MCF 10A (cell line): ENCODE measurements at regions of chr10 and their contacts with region 1.

Region 1: DNA sequence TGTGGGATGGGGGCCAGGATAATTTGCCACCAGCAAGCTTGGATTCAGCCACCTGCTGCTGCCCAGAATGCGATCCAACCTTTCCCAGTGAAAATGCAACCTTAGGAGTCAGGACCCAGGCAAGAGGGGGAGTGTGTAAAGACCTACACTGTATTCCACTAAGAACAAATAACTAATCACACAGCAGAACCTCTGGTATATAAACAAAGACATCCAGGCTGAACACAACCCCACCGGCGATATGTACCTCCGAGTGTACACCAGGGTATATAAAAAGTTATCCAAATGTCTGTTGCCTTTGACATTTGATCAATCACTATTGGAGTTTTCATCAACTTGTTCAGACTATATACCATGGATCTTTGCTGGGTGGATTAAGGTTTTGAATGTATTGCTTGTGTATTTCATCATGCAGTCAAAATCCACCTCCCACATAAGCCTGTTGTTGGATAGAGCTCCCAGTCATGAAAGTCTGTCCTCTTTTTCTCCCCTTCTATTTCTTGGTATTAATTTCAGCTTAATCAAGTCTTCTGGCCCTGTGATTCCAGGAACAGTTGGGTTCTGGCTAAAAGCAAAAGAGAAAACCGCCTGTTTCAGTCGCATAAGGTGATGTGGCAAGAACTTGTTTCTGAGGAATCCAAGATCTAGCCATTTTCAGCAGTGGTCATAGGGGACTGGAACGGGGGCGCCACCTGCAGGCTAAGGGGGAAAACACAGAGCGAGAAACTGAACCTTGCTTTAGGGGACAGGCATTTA is 290.7 kb downstream of the CCDC3 start:
- DNase-seq: peak; percentile 88
- H3K4me3 Mint-ChIP-seq: peak overlapping the region; percentile 13
- H3K27ac Mint-ChIP-seq: peak overlapping the region; percentile 96
- H3K4me1 Mint-ChIP-seq: peaks cover 37% of the 10 kb centered on the region
- H3K27me3 Mint-ChIP-seq: no peaks in the 10 kb centered on the region
- CTCF ChIP-seq: peak; percentile 89

Region 2: DNA sequence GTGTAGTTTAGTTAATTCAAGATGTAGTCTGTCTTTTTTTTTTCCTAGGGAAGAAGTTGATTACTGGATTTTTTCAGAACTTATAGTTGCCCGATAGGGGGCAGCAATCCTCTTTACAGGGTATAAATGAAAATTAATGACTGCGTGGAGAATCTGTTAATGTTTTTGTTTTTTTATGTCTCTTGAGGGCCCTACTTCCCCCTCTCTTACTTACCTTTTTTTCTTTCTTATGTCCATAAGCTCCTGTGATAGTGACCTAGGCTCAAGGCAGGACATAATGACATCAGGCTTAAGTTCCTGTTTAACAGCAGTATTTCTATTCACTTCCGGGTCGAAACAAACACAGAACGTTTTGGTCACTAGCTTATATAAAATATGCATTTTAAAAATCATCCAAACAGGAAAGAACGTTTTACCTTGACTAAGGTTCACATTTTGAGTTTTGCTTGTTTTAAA is 496.0 kb before region 1 on chr10:
- CTCF ChIA-PET with region 1: interaction called, 36 read pairs
- POLR2A ChIA-PET with region 1: no interaction called
- intact Hi-C with region 1: loop called (anchors 1 kb)
- DNase-seq: peak; percentile 65
- H3K4me3 Mint-ChIP-seq: no peak overlapping the region
- H3K27ac Mint-ChIP-seq: peak overlapping the region; percentile 59
- H3K4me1 Mint-ChIP-seq: no peaks in the 10 kb centered on the region
- H3K27me3 Mint-ChIP-seq: no peaks in the 10 kb centered on the region
- CTCF ChIP-seq: peak; percentile 66

Region 3: GRCh38 chr10:12264204-12264940 is 446.4 kb before region 1 on chr10:
- CTCF ChIA-PET with region 1: interaction called, 128 read pairs
- POLR2A ChIA-PET with region 1: interaction called, 6 read pairs
- intact Hi-C with region 1: loop called (anchors 1 kb)
- DNase-seq: peak; percentile 62
- H3K4me3 Mint-ChIP-seq: peak overlapping the region; percentile 62
- H3K27ac Mint-ChIP-seq: peak overlapping the region; percentile 40
- H3K4me1 Mint-ChIP-seq: peaks cover 8% of the 10 kb centered on the region
- H3K27me3 Mint-ChIP-seq: no peaks in the 10 kb centered on the region
- CTCF ChIP-seq: peak; percentile 90

Region 4: GRCh38 chr10:12348870-12349628 is 361.7 kb before region 1 on chr10 and contains the start of gene CAMK1D:
- CTCF ChIA-PET with region 1: interaction called, 5 read pairs
- POLR2A ChIA-PET with region 1: no interaction called
- intact Hi-C with region 1: loop called (anchors 2 kb)
- DNase-seq: peak; percentile 55
- H3K4me3 Mint-ChIP-seq: peak within 1 kb of the TSS; percentile 88
- H3K27ac Mint-ChIP-seq: no peak within 1 kb of the TSS
- H3K4me1 Mint-ChIP-seq: peaks cover 10% of the 10 kb centered on the region
- H3K27me3 Mint-ChIP-seq: peaks cover 15% of the 10 kb centered on the region
- CTCF ChIP-seq: peak; percentile 35
- total RNA-seq, gene CAMK1D: 1.7 and 3.3 TPM in 2 replicates

Region 5: DNA sequence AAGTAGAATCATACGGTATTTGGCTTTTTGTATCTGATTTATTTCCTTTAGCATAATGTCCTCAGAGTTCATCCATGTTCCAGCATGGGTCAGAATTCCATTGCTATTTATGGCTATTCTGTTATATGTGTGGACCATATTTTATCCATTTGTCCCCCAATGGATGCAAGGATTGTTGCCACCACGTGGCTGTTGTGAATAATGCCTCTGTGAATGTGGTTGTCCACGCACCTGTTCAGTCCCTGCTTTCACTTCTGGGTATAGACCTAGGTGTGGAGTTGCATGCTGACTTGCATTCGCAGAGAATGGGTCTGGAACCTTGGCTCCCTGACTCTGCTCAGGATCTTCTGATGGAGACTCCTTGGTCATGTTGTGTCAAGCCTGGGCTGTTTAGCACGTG is 161.5 kb before region 1 on chr10:
- CTCF ChIA-PET with region 1: no interaction called
- POLR2A ChIA-PET with region 1: no interaction called
- intact Hi-C with region 1: loop called (anchors 5 kb)
- DNase-seq: peak; percentile 34
- H3K4me3 Mint-ChIP-seq: no peak overlapping the region
- H3K27ac Mint-ChIP-seq: no peak overlapping the region
- H3K4me1 Mint-ChIP-seq: no peaks in the 10 kb centered on the region
- H3K27me3 Mint-ChIP-seq: no peaks in the 10 kb centered on the region
- CTCF ChIP-seq: no peak

Region 6: DNA sequence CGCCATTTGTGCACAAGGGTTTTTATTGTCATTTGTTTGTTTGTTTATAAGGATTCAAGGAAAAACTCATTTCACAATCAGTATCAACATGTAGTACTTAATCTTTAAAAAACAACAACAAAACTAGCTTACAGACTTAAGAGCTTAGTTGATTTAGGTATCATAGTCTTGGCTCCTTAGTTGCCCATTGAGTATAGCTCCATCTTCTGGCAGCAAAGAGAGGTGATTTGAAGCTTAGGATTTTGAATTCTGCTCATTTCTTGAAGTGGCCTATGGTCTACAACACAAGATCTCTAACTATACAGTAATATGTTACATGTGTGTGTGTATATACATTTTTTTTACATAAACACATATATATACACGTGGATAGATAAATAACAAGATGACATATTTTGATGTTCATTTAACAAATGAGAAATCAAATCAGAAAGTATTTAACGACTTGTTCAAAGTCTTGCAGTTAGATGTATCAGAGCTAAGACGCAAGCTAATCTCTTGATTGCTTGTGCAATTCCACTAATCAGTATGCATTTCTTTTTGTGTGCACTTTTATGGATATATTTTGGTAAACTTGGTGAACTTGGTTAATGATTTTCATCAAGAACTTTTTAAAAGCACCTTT is 54.1 kb before region 1 on chr10:
- CTCF ChIA-PET with region 1: interaction called, 38 read pairs
- POLR2A ChIA-PET with region 1: interaction called, 3 read pairs
- intact Hi-C with region 1: loop called (anchors 1 kb)
- DNase-seq: peak; percentile 54
- H3K4me3 Mint-ChIP-seq: no peak overlapping the region
- H3K27ac Mint-ChIP-seq: no peak overlapping the region
- H3K4me1 Mint-ChIP-seq: no peaks in the 10 kb centered on the region
- H3K27me3 Mint-ChIP-seq: no peaks in the 10 kb centered on the region
- CTCF ChIP-seq: peak; percentile 55

Region 7: GRCh38 chr10:13056456-13057077 is 345.8 kb after region 1 on chr10:
- CTCF ChIA-PET with region 1: interaction called, 11 read pairs
- POLR2A ChIA-PET with region 1: no interaction called
- intact Hi-C with region 1: no loop called
- DNase-seq: peak; percentile 41
- H3K4me3 Mint-ChIP-seq: no peak overlapping the region
- H3K27ac Mint-ChIP-seq: no peak overlapping the region
- H3K4me1 Mint-ChIP-seq: no peaks in the 10 kb centered on the region
- H3K27me3 Mint-ChIP-seq: peaks cover 4% of the 10 kb centered on the region
- CTCF ChIP-seq: peak; percentile 38